Activated CD4-positive, alpha-beta memory T cell treated with anti-CD3 and anti-CD28 coated beads, Interleukin-2, amount 10 ng/mL, durations not matched to agents 7 days and 5 days (primary cell): ENCODE measurements at regions of chr16 and their contacts with region 1.

Region 1: GRCh38 chr16:30519120-30520049 is 7.0 kb downstream of the ZNF768 start:
- DNase-seq: no peak
- H3K4me3 Mint-ChIP-seq: no peak overlapping the region
- H3K27ac Mint-ChIP-seq: no peak overlapping the region
- H3K4me1 Mint-ChIP-seq: peaks cover 21% of the 10 kb centered on the region
- H3K27me3 Mint-ChIP-seq: no peaks in the 10 kb centered on the region

Region 2: DNA sequence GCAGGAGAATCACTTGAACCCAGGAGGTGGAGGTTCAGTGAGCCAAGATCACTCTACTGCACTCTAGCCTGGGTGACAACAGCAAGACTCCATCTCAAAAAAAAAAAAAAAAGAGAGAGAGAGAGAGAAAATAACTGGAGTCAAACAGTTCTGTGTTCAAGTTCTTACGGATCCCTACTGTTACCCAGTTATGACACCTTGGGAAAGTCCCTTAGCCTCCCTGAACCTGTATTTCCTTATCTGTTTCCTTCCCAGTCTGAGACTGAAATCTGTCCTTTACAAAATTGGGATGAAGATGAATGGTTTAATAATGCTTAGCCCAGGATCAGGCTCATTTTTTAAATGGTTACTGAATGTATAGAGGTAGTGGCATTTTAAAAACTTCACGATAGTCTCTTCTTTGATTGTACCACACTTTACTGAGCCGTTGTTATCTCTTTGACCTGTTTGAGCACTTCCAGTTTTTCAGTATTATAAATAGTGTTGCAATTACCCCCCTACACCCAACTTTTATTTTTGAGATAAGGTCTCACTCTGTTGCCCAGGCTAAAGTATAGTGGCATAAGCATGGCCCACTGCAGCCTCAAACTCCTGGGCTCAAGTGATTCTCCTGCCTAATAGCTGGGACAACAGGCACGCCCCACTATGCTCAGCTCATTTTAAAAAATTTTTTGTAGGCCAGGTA is 10.2 kb before region 1 on chr16:
- CTCF ChIA-PET with region 1: interaction called, 3 read pairs
- POLR2A ChIA-PET with region 1: interaction called, 20 read pairs
- DNase-seq: no peak
- H3K4me3 Mint-ChIP-seq: no peak overlapping the region
- H3K27ac Mint-ChIP-seq: peak overlapping the region; percentile 19
- H3K4me1 Mint-ChIP-seq: peaks cover 9% of the 10 kb centered on the region
- H3K27me3 Mint-ChIP-seq: no peaks in the 10 kb centered on the region

Region 3: DNA sequence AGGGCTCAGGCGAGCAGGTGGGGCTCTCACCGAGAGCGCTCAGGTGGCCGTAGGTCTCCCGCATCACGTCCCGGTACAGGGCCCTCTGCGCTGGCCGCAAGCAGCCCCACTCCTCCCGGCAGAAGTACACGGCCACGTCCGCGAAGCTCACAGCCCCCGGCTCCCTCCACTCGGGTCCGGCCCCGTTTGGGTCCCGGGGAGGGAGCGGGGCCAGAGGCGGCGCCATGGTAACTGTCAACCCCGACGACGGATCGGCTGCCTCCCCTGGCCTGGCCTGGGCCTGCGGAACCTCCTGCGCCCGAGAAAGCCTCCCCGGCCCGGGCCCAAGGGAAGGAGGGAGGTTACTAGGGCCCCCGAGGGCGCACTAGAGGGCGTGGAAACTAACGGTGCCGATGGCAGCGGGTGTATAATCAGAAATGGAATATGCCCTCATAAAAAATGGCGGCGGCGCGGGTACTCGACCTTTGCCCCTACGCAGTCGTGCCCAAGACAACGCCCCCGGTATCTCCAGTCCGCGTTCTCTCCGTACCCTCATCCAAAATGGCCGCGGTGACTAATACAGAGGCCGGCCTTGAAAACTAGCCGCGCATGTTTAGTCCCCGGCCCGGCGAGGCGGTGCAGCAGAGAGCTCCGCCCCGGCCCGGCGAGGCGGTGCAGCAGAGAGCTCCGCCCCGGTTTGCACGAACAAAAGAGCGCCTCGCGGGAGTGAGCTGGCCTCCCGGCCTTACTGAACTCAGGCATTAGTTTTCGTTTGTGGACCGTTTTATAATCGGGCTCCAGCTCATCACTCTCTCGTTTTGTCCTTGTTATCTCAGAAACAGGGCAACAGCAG is 38.8 kb after region 1 on chr16 and contains the start of gene ZNF764:
- CTCF ChIA-PET with region 1: no interaction called
- POLR2A ChIA-PET with region 1: interaction called, 10 read pairs
- DNase-seq: peak; percentile 99
- H3K4me3 Mint-ChIP-seq: peak within 1 kb of the TSS; percentile 86
- H3K27ac Mint-ChIP-seq: peak within 1 kb of the TSS; percentile 90
- H3K4me1 Mint-ChIP-seq: peaks cover 51% of the 10 kb centered on the region
- H3K27me3 Mint-ChIP-seq: no peaks in the 10 kb centered on the region
- total RNA-seq, gene ZNF764: 16.0 to 16.8 TPM

Region 4: DNA sequence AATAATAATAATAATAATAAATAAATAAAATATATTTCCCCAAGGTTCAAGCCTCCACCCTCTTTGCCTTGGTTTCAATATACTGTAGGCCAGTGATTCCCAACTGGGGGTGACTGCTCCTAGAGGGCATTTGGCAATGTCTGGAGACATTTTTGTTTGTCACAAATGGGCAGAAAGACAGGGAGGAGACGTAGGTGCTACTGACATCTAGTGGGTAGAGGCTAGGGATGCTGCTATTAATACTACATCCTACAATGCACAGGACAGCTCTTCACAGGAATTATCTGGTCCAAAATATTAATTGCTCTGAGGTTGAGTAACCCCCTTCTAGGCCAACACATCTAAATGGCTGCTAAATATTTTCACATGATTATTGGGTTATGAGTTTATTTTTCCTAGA is 118.6 kb after region 1 on chr16:
- CTCF ChIA-PET with region 1: no interaction called
- POLR2A ChIA-PET with region 1: no interaction called
- DNase-seq: peak; percentile 38
- H3K4me3 Mint-ChIP-seq: no peak overlapping the region
- H3K27ac Mint-ChIP-seq: no peak overlapping the region
- H3K4me1 Mint-ChIP-seq: peaks cover 19% of the 10 kb centered on the region
- H3K27me3 Mint-ChIP-seq: no peaks in the 10 kb centered on the region

Region 5: GRCh38 chr16:30650369-30651123 is 131.2 kb after region 1 on chr16 and contains the start of gene PRR14:
- CTCF ChIA-PET with region 1: no interaction called
- POLR2A ChIA-PET with region 1: no interaction called
- DNase-seq: peak; percentile 99
- H3K4me3 Mint-ChIP-seq: peak within 1 kb of the TSS; percentile 96
- H3K27ac Mint-ChIP-seq: peak within 1 kb of the TSS; percentile 95
- H3K4me1 Mint-ChIP-seq: peaks cover 30% of the 10 kb centered on the region
- H3K27me3 Mint-ChIP-seq: peaks cover 3% of the 10 kb centered on the region
- total RNA-seq, gene PRR14: 78.4 to 86.1 TPM